ENCODE measurements at regions of chr19 and their contacts with region 1.

Region 1: DNA sequence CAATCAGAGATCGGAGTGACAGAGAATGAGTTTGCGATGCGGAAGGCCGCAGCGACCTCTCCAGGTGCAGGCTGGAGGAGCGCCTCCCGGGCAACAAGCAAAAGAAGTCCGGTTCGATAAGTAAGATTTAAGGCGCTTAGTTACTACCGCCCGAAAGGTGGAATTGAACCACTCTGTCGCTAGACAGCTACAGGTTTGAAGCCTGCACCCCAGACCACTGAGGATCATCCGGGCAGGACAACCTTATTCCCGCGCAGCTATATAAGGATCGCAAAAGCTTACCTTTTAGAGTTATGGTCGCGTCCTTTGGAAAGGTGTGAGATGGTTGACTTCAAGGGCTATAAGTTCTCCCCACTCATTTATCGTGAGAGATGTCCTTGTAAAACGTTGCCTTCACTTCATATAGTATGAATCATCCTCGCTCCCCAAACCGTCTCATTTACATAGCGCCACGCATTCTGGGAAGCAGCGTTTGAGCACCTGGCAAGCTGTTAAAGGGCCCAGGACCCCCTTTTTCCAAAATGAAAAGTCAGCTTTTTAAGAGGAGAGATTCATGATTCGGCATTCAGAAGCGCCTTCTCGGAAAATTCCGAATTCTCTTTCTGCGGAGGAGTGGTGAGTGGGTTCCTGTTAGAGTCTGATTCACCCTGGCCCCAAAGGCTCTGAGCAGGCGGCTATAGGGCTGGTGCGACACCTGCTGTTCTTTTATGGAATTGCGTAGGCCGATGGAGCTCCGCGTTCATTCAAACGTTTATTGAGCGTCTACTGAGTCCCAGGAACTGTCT is 10.8 kb downstream of the FOSB start:
- DNase-seq: peak; percentile 86 to 89 (median 89)
- ATAC-seq: peak; percentile 93
- H3K4me3 ChIP-seq: no peak overlapping the region
- H3K4me1 ChIP-seq: no peaks in the 10 kb centered on the region
- CTCF ChIP-seq: peak; percentile 95

Region 2: DNA sequence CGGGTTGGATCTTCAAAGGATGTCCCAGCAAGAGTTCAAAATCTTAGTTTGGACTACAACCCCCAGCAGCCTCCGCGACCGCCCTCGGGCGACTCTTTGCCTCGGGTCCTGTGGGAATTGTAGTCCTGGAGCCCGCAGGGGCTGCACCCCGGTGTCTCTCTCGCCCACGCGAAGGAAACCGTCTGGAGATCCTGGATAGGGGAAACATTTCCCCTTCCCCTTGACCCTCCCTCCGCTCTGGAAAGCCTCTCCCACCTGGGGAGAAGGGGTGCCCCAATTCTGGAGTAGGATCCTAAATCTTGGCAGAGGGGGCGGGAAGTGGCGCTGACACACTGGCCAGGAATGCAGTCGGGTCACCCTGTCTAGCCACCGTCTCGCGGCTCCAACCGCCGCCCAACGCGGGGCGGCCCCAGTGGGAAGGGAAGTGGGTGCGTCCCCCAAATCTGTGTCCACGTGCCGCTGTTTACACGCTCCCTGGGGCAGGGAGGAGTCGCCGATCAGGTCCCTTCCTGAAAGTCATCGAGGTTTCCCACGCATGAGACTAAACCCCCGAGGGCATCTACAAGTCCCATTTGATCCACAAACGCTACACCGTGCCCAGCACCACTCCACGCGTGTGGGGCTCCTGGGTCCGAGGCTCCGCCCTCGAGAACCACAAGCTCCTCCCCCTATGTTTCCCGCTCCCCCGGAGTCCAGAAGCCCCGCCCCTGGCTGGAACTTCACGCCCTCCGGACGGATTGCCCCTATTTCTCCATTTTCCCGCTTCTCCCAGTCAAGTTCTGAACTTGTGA is 73.0 kb before region 1 on chr19:
- intact Hi-C with region 1: no loop called
- DNase-seq: peak; percentile 91 to 93 (median 93)
- ATAC-seq: peak; percentile 77
- H3K4me3 ChIP-seq: peak overlapping the region; percentile 36
- H3K4me1 ChIP-seq: peaks cover 27% of the 10 kb centered on the region
- CTCF ChIP-seq: no peak

Region 3: GRCh38 chr19:45439569-45440254 is 38.9 kb before region 1 on chr19:
- intact Hi-C with region 1: loop called (anchors 2 kb)
- DNase-seq: peak; percentile 89 to 90 (median 90)
- ATAC-seq: peak; percentile 66
- H3K4me3 ChIP-seq: peak overlapping the region; percentile 54
- H3K4me1 ChIP-seq: peaks cover 14% of the 10 kb centered on the region
- CTCF ChIP-seq: peak; percentile 97